Caco-2 (cell line): ENCODE measurements at regions of chr21 and their contacts with region 1.

Region 1: GRCh38 chr21:42453509-42454229 is 42.4 kb downstream of the RSPH1 start:
- DNase-seq: no peak
- H3K4me3 ChIP-seq: no peak overlapping the region
- H3K4me3 Mint-ChIP-seq: no peak overlapping the region
- H3K27ac Mint-ChIP-seq: no peak overlapping the region
- H3K4me1 ChIP-seq: peaks cover 5% of the 10 kb centered on the region
- H3K4me1 Mint-ChIP-seq: peaks cover 16% of the 10 kb centered on the region
- H3K27me3 ChIP-seq: no peaks in the 10 kb centered on the region
- H3K27me3 Mint-ChIP-seq: no peaks in the 10 kb centered on the region
- CTCF ChIP-seq: no peak

Region 2: DNA sequence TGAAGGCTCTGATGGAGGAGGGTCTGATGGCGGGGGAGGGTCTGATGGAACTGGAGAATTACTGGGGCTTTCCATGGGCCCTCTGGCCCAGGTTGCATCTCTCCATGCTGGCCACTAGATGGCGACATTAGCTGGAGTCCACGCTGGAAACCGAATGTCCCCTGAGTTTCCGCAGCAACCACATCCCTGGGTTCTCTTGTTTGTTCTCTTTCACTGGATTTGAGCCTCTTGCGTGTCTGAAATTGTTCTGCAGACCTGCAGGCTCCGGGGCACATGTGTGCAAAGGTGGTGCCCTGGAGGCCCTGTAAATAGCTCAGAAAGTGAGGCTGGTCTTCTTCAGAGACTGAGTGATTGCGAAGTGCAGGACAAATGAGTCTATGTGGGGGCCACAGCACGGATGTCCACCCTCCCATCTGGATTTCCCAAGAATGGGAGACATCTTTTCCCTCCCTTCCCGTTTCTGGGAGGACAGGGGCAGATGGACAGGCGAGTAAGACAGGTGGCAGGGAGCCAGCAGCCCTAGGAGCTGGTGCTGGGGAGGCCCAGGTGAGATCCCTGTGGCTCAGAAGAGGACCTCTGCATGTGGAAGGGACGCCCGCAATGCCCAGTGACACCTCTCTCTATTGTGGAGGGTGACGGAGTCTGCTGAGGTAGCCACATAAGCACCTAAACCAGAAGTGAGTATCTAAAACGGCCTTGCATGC is 307.9 kb before region 1 on chr21:
- CTCF ChIA-PET with region 1: no interaction called
- POLR2A ChIA-PET with region 1: no interaction called
- intact Hi-C with region 1: loop called (anchors 1 kb)
- DNase-seq: peak; percentile 57 to 70
- H3K4me3 ChIP-seq: no peak overlapping the region
- H3K4me3 Mint-ChIP-seq: no peak overlapping the region
- H3K27ac Mint-ChIP-seq: no peak overlapping the region
- H3K4me1 ChIP-seq: no peaks in the 10 kb centered on the region; the same call in 1 of the 2 replicates
- H3K4me1 Mint-ChIP-seq: peaks cover 10% of the 10 kb centered on the region
- H3K27me3 ChIP-seq: no peaks in the 10 kb centered on the region
- H3K27me3 Mint-ChIP-seq: no peaks in the 10 kb centered on the region
- CTCF ChIP-seq: peak; percentile 83 to 90

Region 3: DNA sequence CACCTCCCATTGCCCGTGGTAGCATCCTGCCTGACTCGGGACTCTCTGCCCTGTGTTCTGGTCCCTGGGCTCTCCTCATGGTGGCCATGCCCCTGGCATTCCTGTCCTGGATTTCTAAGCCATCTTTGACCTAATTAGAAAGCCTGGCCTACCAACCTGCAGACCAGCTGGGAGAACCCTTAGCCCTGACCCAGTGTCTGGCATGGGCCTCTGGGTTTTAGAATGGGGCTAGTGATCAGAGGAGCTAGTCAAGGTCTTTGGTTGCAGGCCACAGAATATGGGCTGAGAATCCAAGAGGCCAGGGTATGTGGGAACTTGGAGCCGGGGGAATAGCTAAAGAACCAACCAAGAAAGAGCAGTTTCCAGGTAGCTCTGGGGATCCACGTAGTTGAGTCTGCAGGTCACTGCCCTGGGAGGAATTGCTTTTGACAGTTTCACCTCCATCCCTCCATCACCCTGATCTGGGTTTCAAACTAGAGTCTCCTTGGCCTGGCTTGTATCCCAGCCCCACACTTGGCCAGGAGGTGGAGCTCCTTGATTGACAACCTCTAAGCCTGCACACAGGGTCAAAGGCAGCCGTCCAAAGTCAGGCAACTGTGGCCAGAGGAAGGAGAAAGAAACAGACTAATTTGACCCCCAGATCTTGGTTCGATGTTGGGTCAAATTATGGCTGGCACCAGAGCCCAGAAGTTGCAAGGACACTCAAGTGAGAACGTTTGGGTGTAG is 289.4 kb before region 1 on chr21:
- CTCF ChIA-PET with region 1: no interaction called
- POLR2A ChIA-PET with region 1: no interaction called
- intact Hi-C with region 1: loop called (anchors 1 kb)
- DNase-seq: peak; percentile 63
- H3K4me3 ChIP-seq: no peak overlapping the region
- H3K4me3 Mint-ChIP-seq: no peak overlapping the region
- H3K27ac Mint-ChIP-seq: no peak overlapping the region
- H3K4me1 ChIP-seq: no peaks in the 10 kb centered on the region
- H3K4me1 Mint-ChIP-seq: no peaks in the 10 kb centered on the region
- H3K27me3 ChIP-seq: no peaks in the 10 kb centered on the region
- H3K27me3 Mint-ChIP-seq: no peaks in the 10 kb centered on the region
- CTCF ChIP-seq: peak; percentile 43 to 72

Region 4: DNA sequence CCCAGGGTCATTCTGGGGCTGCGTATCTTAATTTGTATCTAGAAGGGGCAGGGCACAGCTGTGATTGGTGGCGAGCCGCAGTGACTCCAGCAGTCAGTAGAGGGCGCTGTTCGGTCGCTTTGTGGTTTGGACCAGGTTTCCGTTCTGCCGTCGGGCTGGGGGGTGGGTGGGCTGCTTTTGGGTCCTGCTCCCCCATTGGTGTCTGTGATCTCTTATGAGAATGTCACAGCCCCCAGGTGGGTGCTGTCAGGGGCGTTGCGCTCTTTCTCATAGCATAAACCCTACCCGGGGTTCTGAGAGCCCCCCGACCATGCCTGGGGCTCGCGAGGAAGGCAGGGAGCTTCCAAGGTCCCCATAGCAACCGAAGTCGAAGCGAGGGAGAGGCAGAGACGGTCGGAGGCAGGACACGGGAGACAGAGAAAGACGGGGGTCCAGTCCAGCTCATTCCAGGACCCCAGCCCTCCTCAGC is 143.9 kb before region 1 on chr21:
- CTCF ChIA-PET with region 1: interaction called, 4 read pairs
- POLR2A ChIA-PET with region 1: no interaction called
- intact Hi-C with region 1: loop called (anchors 1 kb)
- DNase-seq: peak; percentile 54 to 71
- H3K4me3 ChIP-seq: no peak overlapping the region
- H3K4me3 Mint-ChIP-seq: no peak overlapping the region
- H3K27ac Mint-ChIP-seq: no peak overlapping the region
- H3K4me1 ChIP-seq: peaks cover 8% of the 10 kb centered on the region
- H3K4me1 Mint-ChIP-seq: no peaks in the 10 kb centered on the region
- H3K27me3 ChIP-seq: no peaks in the 10 kb centered on the region
- H3K27me3 Mint-ChIP-seq: peaks cover 3% of the 10 kb centered on the region
- CTCF ChIP-seq: peak; percentile 69 to 81

Region 5: GRCh38 chr21:42330380-42331359 is 123.0 kb before region 1 on chr21:
- CTCF ChIA-PET with region 1: no interaction called
- POLR2A ChIA-PET with region 1: no interaction called
- intact Hi-C with region 1: loop called (anchors 5 kb)
- DNase-seq: peak; percentile 52 to 61
- H3K4me3 ChIP-seq: no peak overlapping the region
- H3K4me3 Mint-ChIP-seq: peak overlapping the region; percentile 66
- H3K27ac Mint-ChIP-seq: peak overlapping the region; percentile 90
- H3K4me1 ChIP-seq: peaks cover 33% of the 10 kb centered on the region
- H3K4me1 Mint-ChIP-seq: peaks cover 40% of the 10 kb centered on the region
- H3K27me3 ChIP-seq: no peaks in the 10 kb centered on the region
- H3K27me3 Mint-ChIP-seq: no peaks in the 10 kb centered on the region
- CTCF ChIP-seq: peak in 1 of 2 experiments; percentile 8

Region 6: DNA sequence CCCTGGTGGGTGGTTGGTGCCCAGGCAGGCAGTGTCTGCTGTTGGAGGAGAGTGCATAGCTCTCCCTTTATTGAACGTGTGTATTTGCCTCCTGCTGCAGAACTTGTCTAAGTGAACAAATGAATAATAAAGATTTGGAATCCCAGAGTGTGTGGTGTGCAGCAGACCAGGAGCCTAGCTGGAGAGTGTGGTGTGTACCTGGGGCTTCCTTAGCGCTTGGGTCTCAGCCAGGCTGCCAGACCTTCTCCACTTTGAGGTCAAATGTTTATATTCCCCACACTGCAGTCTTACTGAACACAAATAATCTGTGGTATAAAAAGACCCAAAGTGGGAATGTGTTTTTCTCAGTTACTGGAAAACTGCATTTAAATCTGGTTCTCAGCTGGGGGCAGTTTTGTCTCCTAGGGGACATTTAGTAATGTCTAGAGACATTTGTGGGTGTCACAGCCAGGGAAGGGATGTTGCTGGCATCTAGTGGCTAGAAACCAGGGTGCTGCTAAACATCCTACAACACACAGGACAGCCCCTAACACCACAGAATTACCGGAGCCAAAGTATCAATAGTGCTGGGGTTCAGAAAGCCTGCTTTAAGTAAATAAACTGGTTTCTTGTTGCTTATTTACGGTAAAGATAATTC is 83.6 kb after region 1 on chr21:
- CTCF ChIA-PET with region 1: no interaction called
- POLR2A ChIA-PET with region 1: no interaction called
- intact Hi-C with region 1: loop called (anchors 5 kb)
- DNase-seq: peak; percentile 19 to 34
- H3K4me3 ChIP-seq: no peak overlapping the region
- H3K4me3 Mint-ChIP-seq: no peak overlapping the region
- H3K27ac Mint-ChIP-seq: no peak overlapping the region
- H3K4me1 ChIP-seq: no peaks in the 10 kb centered on the region
- H3K4me1 Mint-ChIP-seq: no peaks in the 10 kb centered on the region
- H3K27me3 ChIP-seq: no peaks in the 10 kb centered on the region
- H3K27me3 Mint-ChIP-seq: no peaks in the 10 kb centered on the region
- CTCF ChIP-seq: peak in 1 of 2 experiments; percentile 56

Region 7: GRCh38 chr21:42666023-42666747 is 212.5 kb after region 1 on chr21:
- CTCF ChIA-PET with region 1: no interaction called
- POLR2A ChIA-PET with region 1: no interaction called
- intact Hi-C with region 1: no loop called
- DNase-seq: peak in 1 of 2 experiments; percentile 34
- H3K4me3 ChIP-seq: no peak overlapping the region
- H3K4me3 Mint-ChIP-seq: no peak overlapping the region
- H3K27ac Mint-ChIP-seq: no peak overlapping the region
- H3K4me1 ChIP-seq: no peaks in the 10 kb centered on the region
- H3K4me1 Mint-ChIP-seq: no peaks in the 10 kb centered on the region
- H3K27me3 ChIP-seq: no peaks in the 10 kb centered on the region
- H3K27me3 Mint-ChIP-seq: no peaks in the 10 kb centered on the region
- CTCF ChIP-seq: no peak